K562 (cell line): ENCODE measurements at regions of chr22 and their contacts with region 1.

Region 1: DNA sequence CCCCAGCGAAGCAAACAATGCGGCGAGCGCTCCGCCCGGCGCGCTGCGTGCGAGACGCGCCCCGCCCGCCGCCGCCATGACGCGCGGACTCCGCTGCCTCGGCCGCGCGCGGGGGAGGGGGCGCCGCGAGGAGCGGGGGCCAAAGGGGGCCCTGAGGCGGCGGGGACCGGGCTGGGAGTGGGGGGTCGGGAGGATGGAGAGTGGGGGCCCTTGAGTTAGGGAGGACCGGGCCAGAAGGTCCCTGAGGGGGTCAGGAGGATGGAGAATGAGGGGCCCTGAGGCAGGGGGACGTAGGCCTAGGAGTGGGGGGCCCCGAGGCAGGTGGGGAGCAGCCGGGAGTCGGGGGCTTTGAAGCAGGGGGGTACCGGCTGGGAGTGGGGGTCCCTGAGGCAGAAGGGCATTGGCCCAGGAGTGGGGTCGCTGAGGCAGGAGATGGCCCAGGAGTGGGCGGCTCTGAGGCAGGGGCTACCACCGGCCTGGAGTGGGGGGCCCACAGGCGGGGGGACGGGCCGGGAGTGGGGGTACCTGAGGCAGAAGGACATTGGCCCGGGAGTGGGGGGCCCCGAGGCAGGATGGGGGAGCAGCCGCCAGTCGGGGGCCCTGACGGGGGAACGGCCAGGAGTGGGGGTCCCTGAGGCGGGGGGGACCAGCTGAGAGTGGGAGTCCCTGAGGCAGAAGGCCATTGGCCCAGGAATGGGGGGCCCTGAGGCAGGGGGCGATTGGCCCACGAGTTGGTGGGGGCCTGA is at the start of gene BRD1:
- DNase-seq: peak in 2 of 4 experiments; percentile 62 to 70
- ATAC-seq: peak; percentile 76
- H3K4me3 ChIP-seq: peak within 1 kb of the TSS; percentile 65
- H3K27ac ChIP-seq: peak within 1 kb of the TSS; percentile 82
- H3K4me1 ChIP-seq: peaks cover 7 to 51% of the 10 kb centered on the region in 2 experiments; a peak in 4 of 5 replicates
- H3K27me3 ChIP-seq: peaks cover 2 to 5% of the 10 kb centered on the region in 2 experiments; a peak in 2 of 5 replicates
- CTCF ChIP-seq: no peak
- EP300 ChIP-seq: no peak
- POLR2A ChIP-seq: no peak
- RAD21 ChIP-seq: no peak
- polyA plus RNA-seq, gene BRD1: 0.42 to 0.63 TPM

Region 2: GRCh38 chr22:49701380-49702067 is 126.5 kb before region 1 on chr22:
- CTCF ChIA-PET with region 1: no interaction called
- POLR2A ChIA-PET with region 1: no interaction called
- in situ Hi-C with region 1: no loop called
- intact Hi-C with region 1: no loop called
- DNase-seq: peak in 3 of 4 experiments; percentile 16 to 36 (median 24)
- ATAC-seq: no peak
- H3K4me3 ChIP-seq: no peak overlapping the region
- H3K27ac ChIP-seq: no peak overlapping the region
- H3K4me1 ChIP-seq: peaks cover 17 to 28% of the 10 kb centered on the region in 2 experiments; a peak in 4 of 5 replicates
- H3K27me3 ChIP-seq: no peaks in the 10 kb centered on the region; a peak in 1 of 5 replicates
- CTCF ChIP-seq: peak in 2 of 3 experiments; percentile 47 to 66; a peak in 4 of 6 replicates
- EP300 ChIP-seq: no peak
- POLR2A ChIP-seq: no peak
- RAD21 ChIP-seq: peak in 1 of 2 experiments; percentile 33; a peak in 2 of 4 replicates

Region 3: DNA sequence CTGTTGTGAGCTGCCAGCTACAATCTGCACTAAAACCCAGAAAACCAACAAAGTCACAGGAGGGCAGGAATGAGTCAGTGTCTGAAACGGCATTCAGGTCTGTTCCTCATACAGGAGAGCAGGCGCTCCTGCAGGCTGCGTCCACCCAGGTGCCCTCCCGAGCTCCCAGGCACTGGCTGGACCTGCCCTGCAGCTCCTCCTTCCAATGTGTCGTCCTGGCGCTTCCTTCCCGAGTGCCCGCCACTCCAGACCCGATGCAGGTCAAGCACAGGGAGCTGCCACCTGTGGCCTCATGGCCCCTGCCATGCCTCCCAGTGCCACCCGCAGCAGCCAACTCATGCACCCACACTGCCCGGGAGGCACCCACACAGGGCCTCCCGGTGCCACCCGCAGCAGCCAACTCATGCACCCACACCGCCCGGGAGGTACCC is 12.4 kb before region 1 on chr22:
- CTCF ChIA-PET with region 1: no interaction called
- POLR2A ChIA-PET with region 1: interaction called, 10 read pairs
- in situ Hi-C with region 1: no loop called
- intact Hi-C with region 1: no loop called
- DNase-seq: no peak
- ATAC-seq: no peak
- H3K4me3 ChIP-seq: no peak overlapping the region
- H3K27ac ChIP-seq: no peak overlapping the region
- H3K4me1 ChIP-seq: peaks cover 2 to 19% of the 10 kb centered on the region in 2 experiments; a peak in 3 of 5 replicates
- H3K27me3 ChIP-seq: no peaks in the 10 kb centered on the region
- CTCF ChIP-seq: no peak
- EP300 ChIP-seq: no peak
- POLR2A ChIP-seq: no peak
- RAD21 ChIP-seq: no peak

Region 4: DNA sequence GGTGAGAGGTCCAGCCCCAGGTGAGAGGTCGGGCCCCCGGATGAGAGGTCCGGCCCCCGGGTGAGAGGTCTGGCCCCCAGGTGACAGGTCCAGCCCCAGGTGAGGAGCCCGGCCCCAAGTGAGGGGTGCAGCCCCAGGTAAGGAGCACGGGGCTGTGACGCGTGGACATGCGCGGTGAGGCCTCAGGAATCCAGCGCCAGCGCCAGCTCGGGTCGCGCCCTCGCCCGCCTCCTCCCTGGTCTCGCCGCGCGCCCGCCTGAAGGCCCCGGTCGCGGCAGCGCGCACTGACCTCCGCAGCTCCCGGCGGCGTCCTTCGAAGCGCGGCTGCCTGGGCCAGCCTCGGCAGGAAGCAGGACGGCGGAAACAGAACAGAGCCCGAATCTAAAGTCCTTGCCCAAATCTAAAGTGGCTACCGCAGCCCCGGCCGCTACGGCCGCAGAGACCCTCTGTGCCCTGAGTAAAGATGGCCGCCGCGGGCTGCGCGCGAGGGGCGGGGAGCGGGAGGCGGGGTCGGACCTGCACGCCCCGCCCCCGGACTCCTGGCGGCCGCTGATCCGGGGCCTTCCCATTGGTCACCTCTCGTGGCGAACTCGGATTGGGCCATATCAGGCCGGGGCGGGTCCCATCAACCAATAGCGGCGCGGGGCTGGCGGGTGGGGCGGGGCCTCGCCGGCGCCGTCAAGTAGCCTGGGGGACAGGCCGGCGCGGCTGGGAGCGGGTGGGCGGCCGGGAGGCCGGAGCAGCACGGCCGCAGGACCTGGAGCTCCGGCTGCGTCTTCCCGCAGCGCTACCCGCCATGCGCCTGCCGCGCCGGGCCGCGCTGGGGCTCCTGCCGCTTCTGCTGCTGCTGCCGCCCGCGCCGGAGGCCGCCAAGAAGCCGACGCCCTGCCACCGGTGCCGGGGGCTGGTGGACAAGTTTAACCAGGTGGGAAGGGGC is 90.2 kb after region 1 on chr22 and contains the starts of genes ALG12 and CRELD2:
- CTCF ChIA-PET with region 1: no interaction called
- POLR2A ChIA-PET with region 1: no interaction called
- in situ Hi-C with region 1: loop called (anchors 10 kb)
- intact Hi-C with region 1: no loop called
- DNase-seq: peak; percentile 94 to 97 (median 96)
- ATAC-seq: peak; percentile 99
- H3K4me3 ChIP-seq: peak within 1 kb of the TSS; percentile 84
- H3K27ac ChIP-seq: peak within 1 kb of the TSS; percentile 92
- H3K4me1 ChIP-seq: peaks cover 6 to 36% of the 10 kb centered on the region in 2 experiments; a peak in 4 of 5 replicates
- H3K27me3 ChIP-seq: no peaks in the 10 kb centered on the region
- CTCF ChIP-seq: no peak
- EP300 ChIP-seq: no peak
- POLR2A ChIP-seq: peak; percentile 63; the same call in 1 of the 2 replicates
- RAD21 ChIP-seq: no peak
- polyA plus RNA-seq, gene ALG12: 0.20 to 0.62 TPM
- polyA plus RNA-seq, gene CRELD2: 0.96 to 1.5 TPM